Astrocyte of the cerebellum (primary cell): ENCODE measurements at regions of chr11 and their contacts with region 1.

Region 1: DNA sequence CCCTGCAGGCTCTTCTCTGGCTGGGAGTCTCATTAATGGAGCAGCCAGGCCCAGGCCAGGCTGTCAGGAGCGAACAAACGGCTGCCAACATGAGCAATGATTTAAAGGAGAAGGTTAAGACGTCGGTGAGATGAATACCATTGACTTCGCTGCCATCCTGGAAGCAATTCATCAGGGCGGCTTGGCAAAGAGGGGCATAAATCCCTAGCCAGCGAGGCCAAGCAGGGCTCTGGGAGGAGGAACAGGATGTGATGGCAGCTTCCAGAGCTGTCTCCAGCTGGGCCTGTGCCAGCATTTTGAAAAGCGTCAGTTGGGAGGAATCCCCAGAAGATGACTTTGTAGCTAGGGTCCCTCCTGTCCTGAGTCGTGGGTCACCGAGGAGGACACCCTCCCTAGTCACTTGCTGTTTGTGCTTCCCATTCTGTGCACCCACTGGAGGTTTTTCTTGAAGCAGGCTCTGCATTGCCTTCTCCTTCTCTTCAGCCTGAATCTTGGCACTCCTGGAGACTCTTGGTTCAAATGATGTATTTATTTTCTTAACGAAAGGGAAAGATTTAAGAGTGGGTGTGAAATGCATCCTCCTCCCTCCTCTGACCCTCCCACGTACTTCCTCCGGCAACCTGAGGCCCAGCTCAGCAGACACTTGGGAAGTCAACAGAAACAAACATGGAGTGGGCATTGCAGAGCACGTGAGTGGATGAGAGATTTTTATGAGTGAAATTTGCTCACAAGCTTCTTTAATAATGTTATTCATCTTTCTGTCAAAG is 476.3 kb upstream of the CADM1 start:
- DNase-seq: no peak
- H3K4me3 ChIP-seq: no peak overlapping the region
- CTCF ChIP-seq: no peak

Region 2: DNA sequence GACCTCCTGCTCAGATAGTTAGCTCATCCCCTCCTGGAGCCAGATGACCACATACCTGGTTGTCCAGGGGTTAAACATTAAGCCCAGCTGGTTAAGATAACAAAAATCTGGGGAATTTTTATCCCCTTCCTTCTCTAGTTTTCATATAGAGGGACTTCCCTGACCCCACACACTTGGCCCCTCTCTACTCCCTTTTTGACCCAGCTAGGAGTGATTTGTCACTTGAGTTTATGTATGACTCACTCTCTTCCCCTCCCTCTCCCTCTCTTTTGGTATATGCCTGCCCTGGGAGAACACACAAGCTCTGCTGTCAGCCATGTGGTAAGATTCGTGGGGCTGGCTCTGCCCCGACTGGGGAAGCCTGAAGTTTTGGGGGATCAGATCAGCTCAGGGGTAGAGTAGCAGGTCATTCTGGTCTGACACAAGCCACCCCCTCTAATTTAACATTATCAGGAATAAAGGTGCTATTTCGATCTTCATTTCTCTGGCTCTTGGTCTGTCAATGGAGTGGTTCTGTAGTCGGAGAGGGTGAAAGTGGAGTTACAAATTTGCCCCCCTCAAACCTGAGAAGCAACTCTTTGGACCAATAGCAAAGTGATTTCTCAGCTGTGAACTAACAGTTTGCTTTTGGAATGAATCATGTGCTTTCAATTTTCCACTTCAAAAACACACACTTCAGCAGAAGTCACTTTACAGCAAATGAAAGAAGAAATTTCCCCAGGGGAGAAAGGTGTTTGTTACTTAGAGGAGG is 61.0 kb before region 1 on chr11:
- in situ Hi-C with region 1: loop called (anchors 5 kb)
- DNase-seq: no peak
- H3K4me3 ChIP-seq: no peak overlapping the region
- CTCF ChIP-seq: no peak

Region 3: GRCh38 chr11:116044941-116045340 is 64.4 kb after region 1 on chr11:
- in situ Hi-C with region 1: loop called (anchors 5 kb)
- DNase-seq: no peak
- H3K4me3 ChIP-seq: no peak overlapping the region
- CTCF ChIP-seq: no peak